ENCODE measurements at regions of chr10 and their contacts with region 1.

Region 1: DNA sequence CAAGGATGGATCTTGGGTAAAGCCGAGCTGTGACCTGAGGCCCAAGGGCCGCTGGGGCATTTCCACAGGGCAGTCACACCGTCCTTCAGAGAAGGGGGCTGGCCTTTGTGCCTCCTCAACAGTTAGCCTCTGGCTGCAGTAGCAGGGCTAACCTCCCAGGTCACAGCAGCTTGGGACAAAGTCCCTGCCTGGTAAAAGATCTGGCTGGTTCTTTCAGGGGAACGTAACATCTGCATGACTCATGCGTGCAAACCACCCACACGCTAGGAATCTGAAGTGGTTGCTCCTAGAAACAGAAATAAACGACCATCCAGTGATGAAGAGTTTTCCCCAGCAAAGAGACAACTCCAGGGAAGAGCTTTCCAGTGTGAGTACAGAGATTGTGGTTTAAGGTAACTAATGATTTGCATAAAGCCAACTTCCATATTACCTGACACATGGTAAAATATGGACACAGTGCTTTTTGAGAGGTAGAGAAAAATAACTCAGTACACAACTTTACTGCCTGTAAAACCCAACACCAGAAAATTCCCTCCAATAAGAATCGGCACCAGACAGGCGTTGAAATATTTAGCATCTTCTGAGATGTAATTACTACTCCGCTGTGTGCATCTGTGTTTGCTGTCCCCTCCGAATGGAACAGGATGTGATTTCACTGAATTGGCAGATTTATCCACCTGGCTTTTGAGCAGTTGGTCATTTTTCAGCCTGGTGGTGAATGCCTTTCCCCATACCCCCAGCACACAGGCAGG is 84.9 kb upstream of the ADRB1 start:
- DNase-seq: no peak
- H3K4me3 Mint-ChIP-seq: no peak overlapping the region
- H3K27ac Mint-ChIP-seq: no peak overlapping the region
- H3K4me1 Mint-ChIP-seq: peaks cover 48% of the 10 kb centered on the region
- H3K27me3 Mint-ChIP-seq: peaks cover 14% of the 10 kb centered on the region

Region 2: DNA sequence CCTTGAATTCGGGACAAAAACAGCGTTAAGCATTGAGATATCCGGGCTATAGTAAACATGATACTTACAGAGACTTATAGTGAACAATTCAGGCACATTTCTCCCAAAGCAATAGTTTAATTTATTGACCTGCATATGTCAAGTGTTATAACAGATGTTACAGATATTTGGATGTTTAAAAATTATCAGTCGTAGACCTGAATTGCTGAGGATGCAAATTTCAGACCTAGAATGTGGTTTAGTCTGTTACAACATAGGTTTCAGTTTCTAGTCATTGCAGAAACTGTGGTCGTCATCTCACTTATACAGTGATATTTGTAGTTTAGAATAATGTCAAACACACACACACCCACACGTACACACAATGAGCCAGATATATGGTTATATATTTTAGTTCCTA is 1426.6 kb before region 1 on chr10:
- intact Hi-C with region 1: loop called (anchors 5 kb)
- DNase-seq: no peak
- H3K4me3 Mint-ChIP-seq: peak overlapping the region; percentile 8
- H3K27ac Mint-ChIP-seq: no peak overlapping the region
- H3K4me1 Mint-ChIP-seq: peaks cover 36% of the 10 kb centered on the region
- H3K27me3 Mint-ChIP-seq: peaks cover 13% of the 10 kb centered on the region

Region 3: DNA sequence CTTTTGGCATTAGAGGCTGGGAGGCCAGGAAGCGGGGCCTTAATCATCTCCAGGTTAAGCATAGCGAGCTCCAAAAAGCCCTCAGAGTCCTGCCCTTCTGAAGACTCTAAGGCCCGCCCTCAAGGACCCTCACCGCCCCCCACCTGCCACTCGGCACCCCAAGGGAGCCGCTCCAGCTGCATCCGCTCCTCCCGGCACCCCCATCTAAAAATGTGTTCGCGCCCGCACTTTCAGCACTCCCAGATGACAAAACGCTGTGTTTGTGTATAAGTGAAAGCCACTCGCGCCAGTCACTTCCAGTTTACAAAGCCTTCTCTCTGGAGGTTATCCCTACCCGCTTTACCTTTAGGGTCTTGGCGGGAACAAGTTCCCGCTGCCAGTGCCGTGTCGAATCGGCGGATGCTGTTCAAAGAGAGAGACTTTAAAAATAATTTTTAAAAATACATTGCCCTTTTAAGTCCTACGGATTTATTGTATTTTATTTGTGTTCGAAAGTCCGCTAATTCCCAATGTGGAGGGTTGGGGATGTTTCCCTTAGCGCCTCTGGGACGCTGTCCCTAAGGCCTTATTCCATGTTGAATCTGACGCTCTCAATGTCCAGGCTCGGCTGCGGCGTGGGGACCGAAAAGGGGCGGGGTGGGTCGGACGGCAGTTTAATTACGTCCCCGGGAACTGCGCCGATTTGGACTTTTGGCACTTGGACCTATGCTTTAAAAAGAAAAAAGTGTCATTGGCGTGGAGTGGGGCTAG is 104.6 kb before region 1 on chr10 and contains the starts of genes DCLRE1A and NHLRC2:
- intact Hi-C with region 1: loop called (anchors 1 kb)
- DNase-seq: peak; percentile 29
- H3K4me3 Mint-ChIP-seq: peak within 1 kb of the TSS; percentile 97
- H3K27ac Mint-ChIP-seq: peak within 1 kb of the TSS; percentile 95
- H3K4me1 Mint-ChIP-seq: peaks cover 56% of the 10 kb centered on the region
- H3K27me3 Mint-ChIP-seq: no peaks in the 10 kb centered on the region
- total RNA-seq, gene DCLRE1A: 14.1 and 15.2 TPM in 2 replicates
- total RNA-seq, gene NHLRC2: 25.9 and 26.0 TPM in 2 replicates

Region 4: GRCh38 chr10:113907166-113907565 is 51.6 kb before region 1 on chr10:
- intact Hi-C with region 1: no loop called
- DNase-seq: no peak
- H3K4me3 Mint-ChIP-seq: no peak overlapping the region
- H3K27ac Mint-ChIP-seq: no peak overlapping the region
- H3K4me1 Mint-ChIP-seq: no peaks in the 10 kb centered on the region
- H3K27me3 Mint-ChIP-seq: no peaks in the 10 kb centered on the region

Region 5: GRCh38 chr10:113922787-113923570 is 35.8 kb before region 1 on chr10:
- intact Hi-C with region 1: no loop called
- DNase-seq: no peak
- H3K4me3 Mint-ChIP-seq: no peak overlapping the region
- H3K27ac Mint-ChIP-seq: no peak overlapping the region
- H3K4me1 Mint-ChIP-seq: no peaks in the 10 kb centered on the region
- H3K27me3 Mint-ChIP-seq: peaks cover 36% of the 10 kb centered on the region

Region 6: DNA sequence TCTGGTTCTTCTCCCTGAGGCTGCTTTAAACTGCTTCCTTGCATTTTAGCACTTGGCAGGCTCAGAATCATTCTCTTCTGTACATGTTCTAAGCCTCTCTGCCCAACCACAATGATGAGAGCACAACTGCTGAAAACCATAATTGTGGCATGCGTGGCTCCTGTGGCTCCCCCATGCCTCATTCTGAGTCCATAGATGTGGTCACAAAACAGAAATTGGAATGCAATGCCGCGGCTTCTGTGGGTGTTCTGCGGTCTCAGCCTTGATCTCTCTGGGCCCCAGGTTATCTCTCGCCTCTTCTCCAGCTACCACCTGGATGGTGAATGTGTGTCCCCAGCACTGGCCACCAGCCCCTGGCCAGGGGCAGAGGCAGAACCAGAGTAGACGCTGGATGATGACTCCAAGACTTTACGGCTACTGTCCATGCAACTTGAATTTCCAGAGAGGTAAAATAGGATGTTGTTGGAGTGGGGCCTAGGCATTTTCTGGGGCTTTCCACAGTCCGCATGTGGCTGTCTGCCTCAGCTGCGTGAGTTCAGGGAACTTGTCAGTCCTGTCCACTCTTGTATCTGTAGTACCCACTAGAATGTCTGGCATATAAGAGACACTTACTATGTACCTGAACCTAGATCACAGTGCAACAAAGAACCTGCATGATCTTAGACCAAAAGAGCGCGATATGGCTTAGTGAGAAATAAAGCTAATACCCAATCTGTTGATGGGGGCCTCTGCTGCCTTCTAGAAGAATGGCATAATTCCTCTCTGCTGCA is 32.5 kb after region 1 on chr10:
- intact Hi-C with region 1: loop called (anchors 2 kb)
- DNase-seq: no peak
- H3K4me3 Mint-ChIP-seq: no peak overlapping the region
- H3K27ac Mint-ChIP-seq: no peak overlapping the region
- H3K4me1 Mint-ChIP-seq: peaks cover 12% of the 10 kb centered on the region
- H3K27me3 Mint-ChIP-seq: peaks cover 81% of the 10 kb centered on the region

Region 7: GRCh38 chr10:114043532-114044246 is 84.9 kb after region 1 on chr10 and contains the start of gene ADRB1:
- intact Hi-C with region 1: loop called (anchors 5 kb)
- DNase-seq: no peak
- H3K4me3 Mint-ChIP-seq: peak within 1 kb of the TSS; percentile 62
- H3K27ac Mint-ChIP-seq: no peak within 1 kb of the TSS
- H3K4me1 Mint-ChIP-seq: peaks cover 21% of the 10 kb centered on the region
- H3K27me3 Mint-ChIP-seq: peaks cover 73% of the 10 kb centered on the region
- total RNA-seq, gene ADRB1: not detected in 2 replicates

Region 8: GRCh38 chr10:114083040-114083439 is 124.2 kb after region 1 on chr10:
- intact Hi-C with region 1: loop called (anchors 5 kb)
- DNase-seq: no peak
- H3K4me3 Mint-ChIP-seq: no peak overlapping the region
- H3K27ac Mint-ChIP-seq: no peak overlapping the region
- H3K4me1 Mint-ChIP-seq: peaks cover 1% of the 10 kb centered on the region
- H3K27me3 Mint-ChIP-seq: peaks cover 40% of the 10 kb centered on the region

Region 9: DNA sequence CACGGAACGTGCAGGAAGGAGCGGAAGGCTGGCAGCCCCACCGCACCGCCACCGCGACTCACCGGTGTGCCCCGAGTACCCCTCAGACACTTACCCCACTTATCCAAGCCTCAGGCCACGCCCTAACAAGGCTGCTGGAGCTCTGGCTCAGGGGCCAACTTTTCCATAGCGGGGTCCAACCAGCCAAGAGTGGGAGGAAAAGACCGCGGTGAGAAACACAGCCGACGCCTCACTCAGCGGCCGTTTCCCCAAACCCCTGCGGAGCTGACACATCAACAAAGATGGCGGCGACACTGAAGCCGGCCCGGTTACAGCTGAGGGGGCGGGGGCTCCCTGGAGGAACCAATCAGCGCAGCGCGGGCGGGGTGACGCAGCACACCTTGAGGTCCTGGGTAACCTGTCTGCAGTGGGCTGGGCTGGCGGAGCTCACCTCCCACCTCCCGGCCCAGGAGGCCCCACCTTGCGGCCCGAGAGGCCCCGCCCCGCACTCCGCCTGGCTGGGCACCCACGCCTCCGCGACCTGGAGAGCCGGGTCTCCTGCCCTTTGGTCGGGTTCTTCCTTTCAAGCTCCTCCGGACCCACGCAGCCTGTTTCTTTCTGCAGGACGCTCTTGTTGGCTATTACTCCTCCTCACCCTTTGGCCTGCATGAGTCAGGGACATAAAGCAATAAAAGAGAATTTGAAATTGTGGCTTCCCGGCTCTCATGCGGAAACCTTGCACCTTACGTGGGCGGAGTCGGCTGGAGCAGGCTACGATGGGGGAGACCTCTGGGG is 215.3 kb after region 1 on chr10 and contains the start of gene CCDC186:
- intact Hi-C with region 1: loop called (anchors 1 kb)
- DNase-seq: peak; percentile 95
- H3K4me3 Mint-ChIP-seq: peak within 1 kb of the TSS; percentile 97
- H3K27ac Mint-ChIP-seq: peak within 1 kb of the TSS; percentile 95
- H3K4me1 Mint-ChIP-seq: peaks cover 24% of the 10 kb centered on the region
- H3K27me3 Mint-ChIP-seq: peaks cover 26% of the 10 kb centered on the region
- total RNA-seq, gene CCDC186: 11.3 and 13.9 TPM in 2 replicates